CD8-positive, alpha-beta T cell (primary cell): ENCODE measurements at regions of chr2 and their contacts with region 1.

Region 1: DNA sequence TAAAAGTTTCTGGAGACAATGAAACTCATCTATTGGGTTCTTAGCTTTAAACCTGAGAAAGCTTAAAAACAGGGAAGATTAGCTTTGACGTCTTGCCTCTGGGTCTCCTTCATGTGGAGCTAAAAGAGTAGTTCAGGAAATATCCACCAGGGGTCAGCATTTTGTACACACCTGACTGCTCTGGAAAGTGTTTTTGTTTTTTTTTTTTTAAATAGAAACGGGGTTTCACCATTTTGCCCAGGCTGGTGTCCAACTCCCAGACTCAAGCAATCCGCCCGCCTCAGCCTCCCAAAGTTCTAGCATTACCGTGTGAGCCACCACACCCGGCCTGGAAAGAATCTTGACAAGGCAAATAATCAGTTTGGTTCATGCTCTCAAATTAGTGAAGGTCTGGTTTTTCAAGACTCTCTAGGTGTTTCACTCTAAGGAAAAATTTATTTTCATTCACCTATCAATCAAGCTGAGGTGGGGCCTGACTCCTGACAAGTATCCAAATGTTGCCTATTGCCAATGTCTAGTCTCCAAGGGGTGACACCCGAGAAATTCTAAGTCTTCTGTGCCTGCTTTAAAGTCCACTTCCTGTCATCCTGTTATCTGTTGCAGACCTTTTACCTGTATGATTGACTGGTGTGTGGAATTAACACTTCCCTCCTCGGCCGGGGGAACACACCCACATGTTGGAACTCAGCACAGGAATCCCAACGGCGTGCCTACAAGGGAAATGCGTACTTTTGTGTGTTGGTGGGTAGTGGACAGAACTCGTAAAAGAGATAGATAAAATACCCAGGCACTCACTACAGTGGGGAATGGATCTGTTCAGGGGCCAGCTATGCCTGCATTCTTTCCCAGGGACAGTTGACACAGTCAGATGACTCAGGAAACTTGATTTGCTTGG is 11.3 kb downstream of the IL1RN start:
- DNase-seq: peak in 7 of 9 experiments; percentile 31 to 90 (median 64)
- ATAC-seq: peak; percentile 79
- H3K4me3 ChIP-seq: peak overlapping the region in 1 of 2 experiments; percentile 10
- H3K4me3 Mint-ChIP-seq: peak overlapping the region; percentile 62
- H3K27ac ChIP-seq: no peak overlapping the region
- H3K27ac Mint-ChIP-seq: peak overlapping the region; percentile 86
- H3K4me1 ChIP-seq: peaks cover 9% of the 10 kb centered on the region
- H3K4me1 Mint-ChIP-seq: peaks cover 22% of the 10 kb centered on the region
- H3K27me3 ChIP-seq: no peaks in the 10 kb centered on the region
- H3K27me3 Mint-ChIP-seq: no peaks in the 10 kb centered on the region
- CTCF ChIP-seq: peak; percentile 74

Region 2: GRCh38 chr2:113050921-113051895 is 87.5 kb before region 1 on chr2:
- CTCF ChIA-PET with region 1: no interaction called
- POLR2A ChIA-PET with region 1: no interaction called
- intact Hi-C with region 1: no loop called
- DNase-seq: no peak
- ATAC-seq: no peak
- H3K4me3 ChIP-seq: no peak overlapping the region
- H3K4me3 Mint-ChIP-seq: no peak overlapping the region
- H3K27ac ChIP-seq: no peak overlapping the region
- H3K27ac Mint-ChIP-seq: no peak overlapping the region
- H3K4me1 ChIP-seq: no peaks in the 10 kb centered on the region
- H3K4me1 Mint-ChIP-seq: no peaks in the 10 kb centered on the region
- H3K27me3 ChIP-seq: no peaks in the 10 kb centered on the region
- H3K27me3 Mint-ChIP-seq: peaks cover 3% of the 10 kb centered on the region
- CTCF ChIP-seq: no peak

Region 3: DNA sequence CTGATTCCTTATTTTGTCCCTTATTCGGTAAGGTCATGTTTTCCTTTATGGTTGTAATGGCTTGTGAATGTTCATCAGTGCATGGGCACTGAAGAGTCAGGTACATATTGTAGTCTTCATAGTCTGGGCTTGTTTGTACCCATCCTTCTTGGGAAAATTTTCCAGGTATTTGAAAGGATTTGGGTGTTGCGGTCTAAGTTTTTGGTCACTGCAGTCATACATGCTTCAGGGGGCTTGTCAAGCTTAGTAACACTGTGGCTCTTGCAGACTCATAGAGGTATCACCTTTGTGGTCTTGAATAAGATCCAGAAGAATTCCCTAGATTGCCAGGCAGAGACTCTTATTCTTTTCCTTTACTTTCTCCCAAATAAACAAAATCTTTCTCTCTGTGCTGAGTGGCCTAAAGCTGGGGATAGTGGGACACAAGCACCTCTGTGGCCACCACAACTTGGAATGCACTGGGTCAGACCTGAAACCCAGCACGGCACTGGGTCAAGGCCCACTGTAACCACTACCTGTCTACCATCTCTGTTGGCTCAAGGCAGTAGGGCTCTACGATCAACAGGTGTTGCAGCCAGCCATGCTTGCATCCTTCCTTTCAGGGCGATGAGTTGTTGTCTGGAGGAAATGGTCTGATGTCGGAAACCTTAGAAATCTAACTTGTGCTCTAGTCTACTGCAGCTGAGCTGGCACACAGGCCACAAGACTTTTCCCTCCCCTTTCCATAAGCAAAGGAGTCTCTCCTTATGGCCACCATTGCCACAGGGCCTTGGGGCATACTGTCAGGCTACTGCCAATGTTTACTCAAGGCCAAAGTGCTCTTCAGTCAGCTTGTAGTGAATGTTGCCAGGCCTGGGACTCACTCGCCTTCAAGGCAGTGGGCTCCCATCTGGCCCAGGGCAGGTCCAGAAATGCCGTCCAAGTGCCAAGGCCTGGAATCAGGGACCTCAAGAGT is 10.2 kb after region 1 on chr2:
- CTCF ChIA-PET with region 1: interaction called, 31 read pairs
- POLR2A ChIA-PET with region 1: interaction called, 3 read pairs
- intact Hi-C with region 1: no loop called
- DNase-seq: peak in 1 of 9 experiments; percentile 44
- ATAC-seq: no peak
- H3K4me3 ChIP-seq: no peak overlapping the region
- H3K4me3 Mint-ChIP-seq: no peak overlapping the region
- H3K27ac ChIP-seq: no peak overlapping the region
- H3K27ac Mint-ChIP-seq: no peak overlapping the region
- H3K4me1 ChIP-seq: no peaks in the 10 kb centered on the region
- H3K4me1 Mint-ChIP-seq: peaks cover 7% of the 10 kb centered on the region
- H3K27me3 ChIP-seq: no peaks in the 10 kb centered on the region
- H3K27me3 Mint-ChIP-seq: no peaks in the 10 kb centered on the region
- CTCF ChIP-seq: no peak

Region 4: DNA sequence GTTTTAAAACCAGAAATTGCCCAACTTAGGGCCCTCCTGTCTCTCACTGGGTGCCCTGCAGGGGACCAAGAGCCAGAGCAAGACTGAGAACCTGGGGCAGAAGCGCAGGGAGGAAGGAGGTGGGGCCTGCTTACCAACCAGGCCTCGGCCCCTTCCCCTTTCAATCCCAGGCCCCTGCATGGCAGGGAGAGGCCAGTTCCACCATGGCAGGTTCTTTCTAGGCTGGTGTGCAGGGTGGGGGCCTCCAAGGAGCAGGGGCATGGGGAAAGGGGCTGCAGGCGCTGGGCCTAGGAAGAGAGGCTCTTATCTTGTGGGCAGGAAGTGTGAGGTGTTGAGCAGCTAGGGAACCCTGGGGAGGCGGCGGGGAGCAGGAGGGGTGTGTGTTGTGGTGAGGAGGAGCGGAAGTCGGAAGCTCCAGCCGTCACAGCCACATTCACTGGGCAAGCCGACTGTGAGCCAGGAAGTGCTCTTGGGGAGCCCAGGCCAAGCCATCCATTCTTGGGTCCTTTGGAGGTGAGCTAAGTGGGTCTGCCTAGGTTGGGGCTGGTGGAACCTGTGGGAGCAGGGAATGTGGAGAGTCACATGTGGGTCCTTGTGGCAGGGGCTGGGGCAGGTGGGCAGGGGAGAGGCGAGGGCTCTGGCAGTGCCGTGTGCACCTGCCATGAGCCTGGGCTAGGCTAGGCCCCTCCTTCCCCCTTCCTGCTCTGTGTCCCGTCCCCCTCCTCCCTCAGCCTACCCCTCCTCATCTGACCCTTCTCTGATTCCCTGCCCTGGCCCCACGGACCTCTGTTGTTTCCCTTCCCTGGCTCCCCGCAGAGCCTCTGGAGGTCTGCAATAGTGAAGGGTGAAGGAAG is 35.1 kb after region 1 on chr2 and contains the start of gene PSD4:
- CTCF ChIA-PET with region 1: interaction called, 127 read pairs
- POLR2A ChIA-PET with region 1: interaction called, 20 read pairs
- intact Hi-C with region 1: loop called in 1 of 2 experiments (anchors 1 kb)
- DNase-seq: peak; percentile 70 to 95 (median 89)
- ATAC-seq: peak; percentile 75
- H3K4me3 ChIP-seq: peak within 1 kb of the TSS; percentile 73 to 91
- H3K4me3 Mint-ChIP-seq: peak within 1 kb of the TSS; percentile 87
- H3K27ac ChIP-seq: peak within 1 kb of the TSS; percentile 77 to 82
- H3K27ac Mint-ChIP-seq: peak within 1 kb of the TSS; percentile 95
- H3K4me1 ChIP-seq: peaks cover 76% of the 10 kb centered on the region
- H3K4me1 Mint-ChIP-seq: peaks cover 82% of the 10 kb centered on the region
- H3K27me3 ChIP-seq: no peaks in the 10 kb centered on the region
- H3K27me3 Mint-ChIP-seq: no peaks in the 10 kb centered on the region
- CTCF ChIP-seq: no peak
- total RNA-seq, gene PSD4: 80.6 to 86.2 TPM

Region 5: DNA sequence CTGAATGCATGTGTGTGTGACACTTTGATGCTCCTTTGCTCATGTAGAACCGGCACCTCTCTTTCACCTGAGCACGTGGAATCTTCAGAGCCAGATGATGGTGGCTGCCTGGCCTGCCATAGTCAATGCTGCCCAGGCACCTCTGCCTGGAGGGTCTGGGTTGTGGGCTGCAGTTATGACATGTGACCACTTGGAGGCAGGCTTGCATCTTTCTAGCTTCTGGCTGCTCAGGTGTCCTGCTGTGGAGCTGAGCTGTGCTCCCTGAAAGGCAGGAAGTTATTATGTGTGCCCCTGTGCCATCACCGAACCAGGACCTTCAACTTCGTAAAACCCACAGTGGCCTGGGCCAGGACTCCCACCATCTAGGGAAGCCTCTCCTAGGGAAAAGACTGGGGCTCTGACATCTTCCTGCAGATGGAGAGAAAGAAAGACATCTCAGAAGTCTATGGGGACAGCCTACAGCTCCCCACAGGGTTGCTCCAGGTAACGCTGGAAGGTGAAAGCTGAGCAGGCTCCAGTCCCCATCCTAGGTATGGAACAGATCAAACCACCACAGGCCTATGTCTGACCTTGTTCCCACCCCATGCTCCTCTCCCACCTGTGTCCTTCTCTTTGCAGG is 65.3 kb after region 1 on chr2:
- CTCF ChIA-PET with region 1: interaction called, 368 read pairs
- POLR2A ChIA-PET with region 1: interaction called, 10 read pairs
- intact Hi-C with region 1: loop called in 1 of 2 experiments (anchors 1 kb)
- DNase-seq: peak; percentile 60 to 87 (median 77)
- ATAC-seq: peak; percentile 95
- H3K4me3 ChIP-seq: no peak overlapping the region
- H3K4me3 Mint-ChIP-seq: peak overlapping the region; percentile 55
- H3K27ac ChIP-seq: peak overlapping the region in 1 of 2 experiments; percentile 54
- H3K27ac Mint-ChIP-seq: peak overlapping the region; percentile 88
- H3K4me1 ChIP-seq: peaks cover 8% of the 10 kb centered on the region
- H3K4me1 Mint-ChIP-seq: peaks cover 21% of the 10 kb centered on the region
- H3K27me3 ChIP-seq: no peaks in the 10 kb centered on the region
- H3K27me3 Mint-ChIP-seq: no peaks in the 10 kb centered on the region
- CTCF ChIP-seq: peak; percentile 71

Region 6: GRCh38 chr2:113248997-113249770 is 110.5 kb after region 1 on chr2:
- CTCF ChIA-PET with region 1: interaction called, 16 read pairs
- POLR2A ChIA-PET with region 1: no interaction called
- intact Hi-C with region 1: loop called (anchors 2 kb)
- DNase-seq: peak; percentile 51 to 88 (median 74)
- ATAC-seq: peak; percentile 62
- H3K4me3 ChIP-seq: no peak overlapping the region
- H3K4me3 Mint-ChIP-seq: no peak overlapping the region
- H3K27ac ChIP-seq: peak overlapping the region in 1 of 2 experiments; percentile 25
- H3K27ac Mint-ChIP-seq: peak overlapping the region; percentile 12
- H3K4me1 ChIP-seq: peaks cover 47% of the 10 kb centered on the region
- H3K4me1 Mint-ChIP-seq: peaks cover 50% of the 10 kb centered on the region
- H3K27me3 ChIP-seq: no peaks in the 10 kb centered on the region
- H3K27me3 Mint-ChIP-seq: no peaks in the 10 kb centered on the region
- CTCF ChIP-seq: peak; percentile 94